ENCODE measurements at regions of chr9 and their contacts with region 1.

Region 1: DNA sequence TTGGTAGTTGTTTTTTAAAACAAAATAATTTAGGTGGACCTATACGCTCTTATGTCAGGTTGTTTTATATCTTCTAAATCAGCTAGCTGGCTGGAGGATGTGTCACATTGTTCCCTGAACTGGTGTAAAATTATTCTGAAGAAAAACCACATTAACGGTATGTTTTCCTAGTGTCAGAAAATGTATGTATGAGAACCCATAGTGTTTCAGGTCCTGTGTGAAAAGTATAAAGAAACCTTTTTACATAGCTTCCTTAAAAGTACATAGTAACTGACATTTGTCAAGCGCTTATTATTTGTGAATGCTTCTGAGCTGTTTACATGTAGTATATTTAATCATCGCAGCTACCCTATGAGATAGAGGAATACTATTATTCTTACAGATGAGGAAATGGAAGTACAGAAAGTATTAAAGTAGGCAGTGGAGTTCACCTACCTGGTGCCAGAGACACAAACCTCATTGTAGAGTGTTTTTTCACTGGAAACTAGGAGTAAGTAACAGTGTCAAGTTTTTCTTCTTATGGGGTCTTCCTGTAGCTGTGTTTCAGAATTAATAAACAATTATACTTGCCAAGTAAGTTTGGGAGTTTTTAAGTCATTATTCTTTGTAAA is 10.4 kb upstream of the FAM120AOS start:
- DNase-seq: no peak
- H3K4me3 Mint-ChIP-seq: peak overlapping the region; percentile 80
- H3K27ac Mint-ChIP-seq: peak overlapping the region; percentile 91
- H3K4me1 Mint-ChIP-seq: peaks cover 83% of the 10 kb centered on the region
- H3K27me3 Mint-ChIP-seq: no peaks in the 10 kb centered on the region

Region 2: DNA sequence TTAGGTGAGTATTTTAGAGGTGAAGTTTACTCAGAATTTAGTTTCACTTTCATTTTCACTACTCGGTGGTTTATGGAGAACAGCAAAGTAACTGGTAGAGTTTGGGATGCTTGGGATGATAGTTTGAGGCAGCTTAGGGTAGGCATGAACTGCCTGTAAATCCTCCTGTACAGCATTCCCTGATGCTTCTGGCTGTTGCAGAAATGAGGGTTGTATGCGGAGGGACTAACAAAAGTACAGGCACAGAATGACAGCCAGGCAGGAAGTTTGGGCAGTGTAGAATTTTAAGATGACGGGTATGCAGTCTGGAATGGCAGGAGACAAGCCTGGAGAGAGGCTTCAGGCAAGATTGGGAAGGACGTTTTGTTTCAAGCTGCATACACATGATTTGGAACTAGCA is 37.7 kb after region 1 on chr9:
- intact Hi-C with region 1: loop called (anchors 2 kb)
- DNase-seq: peak; percentile 69
- H3K4me3 Mint-ChIP-seq: peak overlapping the region; percentile 79
- H3K27ac Mint-ChIP-seq: peak overlapping the region; percentile 70
- H3K4me1 Mint-ChIP-seq: peaks cover 44% of the 10 kb centered on the region
- H3K27me3 Mint-ChIP-seq: no peaks in the 10 kb centered on the region